Activated B cell treated with CpG ODN at 0.5 μM for 24 hours (primary cell): ENCODE measurements at regions of chr13 and their contacts with region 1.

Region 1: DNA sequence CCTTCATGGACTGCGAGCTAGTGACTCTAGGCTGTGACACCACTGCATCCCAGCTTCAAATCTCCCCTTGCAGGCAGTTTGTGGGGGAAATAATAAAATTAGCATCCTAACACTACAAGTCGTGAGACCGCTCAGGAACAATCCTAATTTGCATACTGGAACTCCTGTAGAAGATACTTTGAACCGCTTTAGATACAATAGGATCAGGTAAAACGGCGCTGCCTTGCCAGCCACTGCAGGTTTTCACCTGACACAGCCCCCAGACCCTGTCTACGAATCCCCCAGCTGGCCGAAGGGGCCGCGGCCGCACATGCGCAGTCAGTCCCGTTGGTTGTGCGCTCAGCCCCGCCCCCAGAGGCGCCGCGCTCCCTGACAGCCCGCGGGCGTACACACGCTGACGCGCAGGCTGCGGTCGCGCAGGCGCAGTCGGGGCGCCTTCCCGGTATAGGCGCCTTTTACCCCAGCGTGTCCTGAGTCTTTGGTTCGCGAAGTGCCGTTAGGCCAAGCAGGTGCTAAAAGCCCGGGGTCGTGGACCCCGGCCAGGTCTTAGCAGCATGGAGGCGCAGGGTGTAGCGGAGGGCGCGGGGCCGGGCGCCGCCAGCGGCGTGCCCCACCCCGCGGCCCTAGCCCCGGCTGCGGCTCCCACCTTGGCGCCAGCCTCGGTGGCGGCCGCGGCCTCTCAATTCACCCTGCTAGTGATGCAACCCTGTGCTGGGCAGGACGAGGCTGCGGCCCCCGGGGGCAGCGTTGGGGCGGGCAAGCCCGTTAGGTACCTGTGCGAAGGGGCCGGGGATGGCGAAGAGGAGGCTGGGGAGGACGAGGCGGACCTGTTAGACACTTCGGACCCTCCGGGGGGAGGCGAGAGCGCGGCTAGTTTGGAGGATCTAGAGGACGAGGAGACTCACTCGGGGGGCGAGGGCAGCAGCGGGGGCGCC is at the start of gene RFXAP:
- DNase-seq: peak; percentile 93
- ATAC-seq: peak; percentile 94
- H3K4me3 Mint-ChIP-seq: peak within 1 kb of the TSS; percentile 93
- H3K27ac Mint-ChIP-seq: peak within 1 kb of the TSS; percentile 90
- H3K4me1 Mint-ChIP-seq: peaks cover 44% of the 10 kb centered on the region
- H3K27me3 Mint-ChIP-seq: peaks cover 6% of the 10 kb centered on the region
- CTCF ChIP-seq: no peak
- total RNA-seq, gene RFXAP: 8.8 and 9.6 TPM in 2 replicates

Region 2: DNA sequence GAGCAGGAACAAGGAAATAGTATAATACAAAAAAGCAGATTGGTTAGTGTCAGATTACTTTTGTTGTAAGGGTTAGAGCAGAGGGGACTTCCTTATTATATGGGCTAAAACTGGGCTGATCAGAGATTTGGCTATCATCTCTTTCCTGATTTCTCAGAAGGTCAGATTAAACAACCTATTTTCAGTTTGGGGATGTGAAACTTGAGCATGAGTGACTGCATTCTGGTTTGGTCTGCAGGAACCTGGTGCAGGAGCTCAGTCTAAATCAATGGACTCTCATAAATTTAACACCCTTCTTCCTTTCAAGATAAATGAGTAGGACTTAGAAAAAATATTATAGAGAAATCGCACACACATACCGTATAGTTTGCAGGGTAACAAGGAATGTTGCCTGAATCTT is 13.0 kb before region 1 on chr13:
- CTCF ChIA-PET with region 1: interaction called, 3 read pairs
- POLR2A ChIA-PET with region 1: interaction called, 3 read pairs
- intact Hi-C with region 1: loop called (anchors 1 kb)
- DNase-seq: no peak
- ATAC-seq: peak; percentile 50
- H3K4me3 Mint-ChIP-seq: no peak overlapping the region
- H3K27ac Mint-ChIP-seq: no peak overlapping the region
- H3K4me1 Mint-ChIP-seq: peaks cover 18% of the 10 kb centered on the region
- H3K27me3 Mint-ChIP-seq: peaks cover 4% of the 10 kb centered on the region
- CTCF ChIP-seq: no peak

Region 3: DNA sequence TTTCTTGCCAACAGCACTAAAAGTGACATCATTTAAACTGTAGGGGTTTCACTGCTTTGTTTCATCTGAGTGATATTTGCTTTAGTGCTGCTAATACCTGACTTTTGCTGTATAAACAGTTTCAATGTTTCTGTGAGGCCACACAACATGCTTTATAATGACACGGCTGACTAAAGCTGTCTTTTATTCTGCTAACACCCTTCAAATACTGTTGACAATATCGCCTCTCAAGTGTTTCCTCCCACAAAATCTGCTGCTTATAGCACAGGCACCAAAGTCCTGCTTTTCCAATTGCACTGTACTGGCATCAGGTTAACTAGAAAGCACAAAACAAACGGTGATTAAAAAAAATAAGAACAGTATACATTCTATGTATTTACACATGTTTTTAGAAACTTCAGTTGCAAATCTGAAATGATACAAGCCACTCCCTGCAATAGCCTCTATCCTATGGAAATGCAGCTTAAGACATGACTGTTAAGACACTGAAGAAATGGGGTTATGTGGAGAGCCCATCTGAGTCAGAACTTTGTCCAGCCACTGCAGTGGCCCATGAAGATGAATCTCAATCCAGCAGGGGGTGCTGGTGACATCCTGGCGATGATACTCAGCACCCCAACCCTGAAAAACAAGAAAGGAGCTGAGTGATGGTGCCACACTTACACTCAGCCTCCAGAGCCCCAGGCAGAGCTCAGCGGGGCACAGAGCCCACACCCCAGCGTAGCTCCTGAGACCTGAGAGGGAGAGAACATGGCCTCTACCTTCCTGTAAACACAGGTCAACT is 29.3 kb after region 1 on chr13:
- CTCF ChIA-PET with region 1: no interaction called
- POLR2A ChIA-PET with region 1: no interaction called
- intact Hi-C with region 1: no loop called
- DNase-seq: no peak
- ATAC-seq: no peak
- H3K4me3 Mint-ChIP-seq: no peak overlapping the region
- H3K27ac Mint-ChIP-seq: no peak overlapping the region
- H3K4me1 Mint-ChIP-seq: no peaks in the 10 kb centered on the region
- H3K27me3 Mint-ChIP-seq: no peaks in the 10 kb centered on the region
- CTCF ChIP-seq: no peak

Region 4: DNA sequence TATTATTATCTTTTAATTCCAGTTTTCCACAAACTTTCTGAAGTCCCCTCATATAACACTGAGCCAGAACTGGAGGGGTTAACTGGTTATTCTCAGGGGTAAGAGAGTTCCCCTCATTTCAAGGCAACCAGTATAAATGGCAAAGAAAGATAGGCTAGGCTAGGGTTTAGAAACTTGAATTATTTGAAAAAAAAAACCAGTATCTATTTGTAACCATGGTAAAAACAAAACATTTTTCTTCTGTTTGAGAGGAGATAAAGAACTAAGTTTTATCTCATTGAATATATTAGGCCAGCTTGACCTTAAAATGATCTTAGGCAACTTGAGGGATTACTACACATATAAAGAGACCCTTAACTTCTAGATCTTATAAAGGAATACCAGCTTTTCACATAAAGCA is 220.8 kb after region 1 on chr13:
- CTCF ChIA-PET with region 1: no interaction called
- POLR2A ChIA-PET with region 1: no interaction called
- intact Hi-C with region 1: no loop called
- DNase-seq: no peak
- ATAC-seq: no peak
- H3K4me3 Mint-ChIP-seq: no peak overlapping the region
- H3K27ac Mint-ChIP-seq: no peak overlapping the region
- H3K4me1 Mint-ChIP-seq: no peaks in the 10 kb centered on the region
- H3K27me3 Mint-ChIP-seq: no peaks in the 10 kb centered on the region
- CTCF ChIP-seq: no peak